ENCODE measurements at regions of chr16 and their contacts with region 1.

Region 1: GRCh38 chr16:28277537-28278388 is 14.6 kb upstream of the SBK1 start:
- DNase-seq: peak; percentile 71 to 93 (median 84)
- ATAC-seq: peak; percentile 88
- H3K4me3 ChIP-seq: peak overlapping the region; percentile 61
- H3K4me3 Mint-ChIP-seq: peak overlapping the region; percentile 79
- H3K27ac ChIP-seq: peak overlapping the region; percentile 39 to 42
- H3K27ac Mint-ChIP-seq: peak overlapping the region; percentile 91
- H3K4me1 ChIP-seq: peaks cover 43% of the 10 kb centered on the region
- H3K4me1 Mint-ChIP-seq: peaks cover 53% of the 10 kb centered on the region
- H3K27me3 ChIP-seq: no peaks in the 10 kb centered on the region
- H3K27me3 Mint-ChIP-seq: no peaks in the 10 kb centered on the region
- CTCF ChIP-seq: peak; percentile 99

Region 2: DNA sequence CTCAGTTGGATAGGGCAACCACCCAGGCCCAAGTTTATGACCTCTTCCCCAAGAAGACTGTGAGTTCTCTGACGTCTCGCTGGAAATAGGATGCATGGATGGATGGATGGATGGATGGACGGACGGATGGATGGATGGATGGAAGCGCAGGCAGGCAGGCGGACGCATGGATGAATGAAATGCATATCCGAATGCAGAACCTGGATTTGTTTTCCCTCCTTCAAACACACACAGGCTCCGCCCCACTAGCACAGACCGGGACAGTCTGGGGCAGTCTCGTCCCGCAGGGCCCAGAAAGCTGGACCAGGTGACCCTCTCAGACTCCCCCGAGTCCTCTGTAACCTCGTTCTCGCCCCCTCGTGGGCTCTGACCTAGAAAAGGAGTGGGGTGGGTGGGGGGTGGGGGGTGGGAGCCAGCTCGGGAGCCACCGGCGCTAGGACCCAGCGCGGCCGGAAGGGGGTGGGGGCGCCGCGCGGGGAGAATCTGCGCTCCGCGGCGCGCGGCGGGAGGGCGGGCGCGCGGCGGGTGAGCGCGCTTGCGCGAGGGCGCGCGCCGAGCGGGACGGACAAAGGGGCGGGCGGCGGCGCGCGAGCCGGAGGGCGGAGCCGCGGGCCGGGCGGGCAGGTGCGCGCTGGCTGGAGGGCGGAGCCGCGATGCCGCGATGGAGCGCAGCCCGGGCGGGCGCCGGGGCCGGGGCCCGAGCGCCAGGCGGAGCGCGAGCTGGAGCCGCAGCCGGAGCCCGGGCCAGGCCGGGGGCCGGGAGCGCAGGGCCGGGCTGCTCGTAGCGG is 14.3 kb after region 1 on chr16 and contains the start of gene SBK1:
- CTCF ChIA-PET with region 1: interaction called, 7 read pairs
- POLR2A ChIA-PET with region 1: interaction called, 26 read pairs
- intact Hi-C with region 1: loop called (anchors 2 kb)
- DNase-seq: peak; percentile 71 to 96 (median 84)
- ATAC-seq: peak; percentile 91
- H3K4me3 ChIP-seq: peak within 1 kb of the TSS; percentile 97
- H3K4me3 Mint-ChIP-seq: peak within 1 kb of the TSS; percentile 95
- H3K27ac ChIP-seq: peak within 1 kb of the TSS in 1 of 2 donors; percentile 67
- H3K27ac Mint-ChIP-seq: peak within 1 kb of the TSS; percentile 86
- H3K4me1 ChIP-seq: peaks cover 70% of the 10 kb centered on the region
- H3K4me1 Mint-ChIP-seq: peaks cover 70% of the 10 kb centered on the region
- H3K27me3 ChIP-seq: no peaks in the 10 kb centered on the region
- H3K27me3 Mint-ChIP-seq: no peaks in the 10 kb centered on the region
- CTCF ChIP-seq: no peak
- total RNA-seq, gene SBK1: 13.0 to 13.5 TPM

Region 3: GRCh38 chr16:28297784-28298510 is 20.2 kb after region 1 on chr16:
- CTCF ChIA-PET with region 1: interaction called, 7 read pairs
- POLR2A ChIA-PET with region 1: interaction called, 26 read pairs
- intact Hi-C with region 1: loop called (anchors 2 kb)
- DNase-seq: peak in 4 of 14 experiments; percentile 42 to 61 (median 46)
- ATAC-seq: peak; percentile 49
- H3K4me3 ChIP-seq: peak overlapping the region; percentile 11
- H3K4me3 Mint-ChIP-seq: peak overlapping the region; percentile 85
- H3K27ac ChIP-seq: peak overlapping the region in 1 of 2 donors; percentile 23
- H3K27ac Mint-ChIP-seq: peak overlapping the region; percentile 78
- H3K4me1 ChIP-seq: peaks cover 89% of the 10 kb centered on the region
- H3K4me1 Mint-ChIP-seq: peaks cover 66% of the 10 kb centered on the region
- H3K27me3 ChIP-seq: no peaks in the 10 kb centered on the region
- H3K27me3 Mint-ChIP-seq: no peaks in the 10 kb centered on the region
- CTCF ChIP-seq: no peak

Region 4: DNA sequence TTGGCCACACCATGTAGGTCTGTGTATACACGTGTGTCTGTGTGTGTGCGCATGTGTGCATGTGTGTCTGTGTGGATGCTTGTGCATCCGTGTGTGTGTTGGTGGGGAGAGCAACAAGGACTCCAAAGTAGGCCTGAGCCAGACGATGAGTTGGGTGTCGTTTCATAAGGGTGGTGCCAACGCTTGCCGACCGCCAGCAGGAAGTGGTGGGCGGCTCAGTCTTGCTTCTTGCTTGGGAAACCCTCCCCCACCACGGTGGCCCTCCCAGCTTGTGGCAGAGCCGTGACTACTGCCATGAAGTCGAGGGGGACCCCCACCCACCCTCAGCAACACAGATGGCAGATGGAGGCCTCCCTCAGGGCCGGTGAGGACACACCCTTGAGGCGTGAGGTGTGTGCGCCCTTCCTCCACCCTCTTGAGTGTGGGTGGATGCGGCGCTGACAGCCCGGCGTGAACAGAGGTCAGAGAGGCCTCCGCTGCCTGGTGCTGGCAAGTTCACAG is 32.1 kb after region 1 on chr16:
- CTCF ChIA-PET with region 1: interaction called, 7 read pairs
- POLR2A ChIA-PET with region 1: interaction called, 54 read pairs
- intact Hi-C with region 1: no loop called
- DNase-seq: peak; percentile 65 to 97 (median 85)
- ATAC-seq: peak; percentile 92
- H3K4me3 ChIP-seq: peak overlapping the region; percentile 32
- H3K4me3 Mint-ChIP-seq: peak overlapping the region; percentile 75
- H3K27ac ChIP-seq: peak overlapping the region; percentile 86 to 89
- H3K27ac Mint-ChIP-seq: peak overlapping the region; percentile 96
- H3K4me1 ChIP-seq: peaks cover 59% of the 10 kb centered on the region
- H3K4me1 Mint-ChIP-seq: peaks cover 69% of the 10 kb centered on the region
- H3K27me3 ChIP-seq: no peaks in the 10 kb centered on the region
- H3K27me3 Mint-ChIP-seq: no peaks in the 10 kb centered on the region
- CTCF ChIP-seq: no peak

Region 5: GRCh38 chr16:28317040-28317880 is 39.5 kb after region 1 on chr16:
- CTCF ChIA-PET with region 1: interaction called, 60 read pairs
- POLR2A ChIA-PET with region 1: interaction called, 54 read pairs
- intact Hi-C with region 1: loop called (anchors 1 kb)
- DNase-seq: peak; percentile 61 to 86 (median 70)
- ATAC-seq: peak; percentile 75
- H3K4me3 ChIP-seq: no peak overlapping the region
- H3K4me3 Mint-ChIP-seq: peak overlapping the region; percentile 38
- H3K27ac ChIP-seq: no peak overlapping the region
- H3K27ac Mint-ChIP-seq: peak overlapping the region; percentile 78
- H3K4me1 ChIP-seq: peaks cover 50% of the 10 kb centered on the region
- H3K4me1 Mint-ChIP-seq: peaks cover 28% of the 10 kb centered on the region
- H3K27me3 ChIP-seq: no peaks in the 10 kb centered on the region
- H3K27me3 Mint-ChIP-seq: no peaks in the 10 kb centered on the region
- CTCF ChIP-seq: peak; percentile 95

Region 6: DNA sequence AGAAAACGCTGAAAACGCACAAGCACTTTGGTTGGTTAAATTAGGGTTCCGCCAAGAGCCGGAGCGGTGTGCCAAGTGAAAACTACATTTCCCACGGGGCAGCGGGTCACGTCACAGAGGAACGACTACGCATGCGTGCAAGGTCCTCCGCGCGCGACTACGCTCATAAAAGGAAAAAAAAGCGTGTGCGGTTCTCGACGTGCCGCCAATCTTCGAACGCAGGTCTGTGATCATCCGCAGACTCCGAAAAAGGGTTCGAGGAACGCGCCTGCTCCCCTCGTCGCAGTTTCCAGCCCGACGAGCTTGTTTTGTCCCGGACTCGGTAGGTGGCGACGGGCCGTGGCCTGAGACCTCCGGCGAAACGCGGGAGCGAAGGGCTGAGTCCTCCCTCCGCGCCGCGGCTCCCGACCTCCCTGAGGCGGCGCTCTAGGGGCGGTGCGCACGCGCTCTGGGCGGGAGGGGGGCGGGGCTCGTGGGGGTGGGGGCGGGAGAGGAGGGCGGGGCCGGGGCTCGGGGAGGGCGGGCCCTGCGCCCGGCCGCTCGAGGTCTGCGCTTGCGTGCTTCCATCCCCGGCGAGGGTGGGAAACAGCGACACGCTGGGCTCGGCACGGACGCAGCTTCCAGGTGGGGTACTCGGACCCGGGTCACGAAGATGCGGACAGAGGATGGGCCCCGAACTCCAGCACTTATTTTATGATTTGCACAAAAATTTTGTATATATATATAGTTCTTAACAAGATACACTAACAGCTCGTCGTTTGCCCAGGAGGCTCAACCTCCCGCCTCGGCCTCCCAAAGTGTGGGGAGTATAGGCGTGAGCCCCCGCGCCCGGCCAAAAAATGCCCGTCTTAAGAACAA is 276.2 kb after region 1 on chr16 and contains the start of gene SGF29:
- CTCF ChIA-PET with region 1: interaction called, 5 read pairs
- POLR2A ChIA-PET with region 1: interaction called, 3 read pairs
- intact Hi-C with region 1: loop called (anchors 1 to 2 kb)
- DNase-seq: peak; percentile 89 to 98 (median 93)
- ATAC-seq: peak; percentile 86
- H3K4me3 ChIP-seq: peak within 1 kb of the TSS; percentile 84
- H3K4me3 Mint-ChIP-seq: peak within 1 kb of the TSS; percentile 94
- H3K27ac ChIP-seq: peak within 1 kb of the TSS; percentile 90 to 98
- H3K27ac Mint-ChIP-seq: peak within 1 kb of the TSS; percentile 97
- H3K4me1 ChIP-seq: peaks cover 42% of the 10 kb centered on the region
- H3K4me1 Mint-ChIP-seq: peaks cover 43% of the 10 kb centered on the region
- H3K27me3 ChIP-seq: no peaks in the 10 kb centered on the region
- H3K27me3 Mint-ChIP-seq: no peaks in the 10 kb centered on the region
- CTCF ChIP-seq: peak; percentile 34
- total RNA-seq, gene SGF29: 38.9 to 40.3 TPM

Region 7: GRCh38 chr16:28617874-28618273 is 340.1 kb after region 1 on chr16:
- CTCF ChIA-PET with region 1: no interaction called
- POLR2A ChIA-PET with region 1: no interaction called
- intact Hi-C with region 1: loop called in 1 of 2 experiments (anchors 5 kb)
- DNase-seq: no peak
- ATAC-seq: no peak
- H3K4me3 ChIP-seq: no peak overlapping the region
- H3K4me3 Mint-ChIP-seq: no peak overlapping the region
- H3K27ac ChIP-seq: no peak overlapping the region
- H3K27ac Mint-ChIP-seq: no peak overlapping the region
- H3K4me1 ChIP-seq: peaks cover 12% of the 10 kb centered on the region
- H3K4me1 Mint-ChIP-seq: peaks cover 15% of the 10 kb centered on the region
- H3K27me3 ChIP-seq: no peaks in the 10 kb centered on the region
- H3K27me3 Mint-ChIP-seq: no peaks in the 10 kb centered on the region
- CTCF ChIP-seq: no peak